ENCODE measurements at regions of chr10 and their contacts with region 1.

Region 1: GRCh38 chr10:76160446-76161300 is 729.2 kb downstream of the LRMDA start:
- DNase-seq: no peak

Region 2: DNA sequence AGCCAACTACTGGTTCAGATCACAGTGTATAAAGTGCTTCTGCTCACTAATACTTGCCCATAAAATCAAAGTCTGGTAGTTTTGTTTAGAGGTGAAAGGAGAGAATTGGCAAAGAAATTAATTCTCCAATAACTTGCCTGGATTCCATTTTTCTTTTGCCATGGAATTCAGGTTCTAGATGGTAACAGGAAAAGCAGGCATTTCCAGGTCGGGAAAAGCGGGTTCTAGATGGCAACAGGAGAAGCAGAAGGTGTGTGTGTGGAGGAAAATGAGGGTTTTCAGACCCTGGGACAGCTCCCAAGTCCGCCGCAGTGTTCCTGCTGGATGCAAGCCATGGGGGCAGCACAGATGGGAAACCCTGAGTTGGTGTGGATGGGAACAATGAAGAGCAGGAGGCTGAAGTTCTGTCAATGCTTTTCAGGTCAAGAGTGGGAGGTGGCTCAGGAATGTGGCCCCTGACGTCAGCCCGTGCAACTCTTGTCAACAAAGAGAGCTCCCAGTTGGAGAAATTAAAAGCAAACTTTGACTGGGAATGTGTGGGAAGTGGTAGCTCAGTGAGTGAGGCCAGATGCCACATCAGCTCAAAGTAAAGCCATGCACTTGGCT is 32.6 kb before region 1 on chr10:
- intact Hi-C with region 1: loop called in 1 of 2 experiments (anchors 1 kb)
- DNase-seq: no peak

Measured in posterior vena cava (tissue), 2 donors.